ENCODE measurements at regions of chr12 and their contacts with region 1.

Region 1: DNA sequence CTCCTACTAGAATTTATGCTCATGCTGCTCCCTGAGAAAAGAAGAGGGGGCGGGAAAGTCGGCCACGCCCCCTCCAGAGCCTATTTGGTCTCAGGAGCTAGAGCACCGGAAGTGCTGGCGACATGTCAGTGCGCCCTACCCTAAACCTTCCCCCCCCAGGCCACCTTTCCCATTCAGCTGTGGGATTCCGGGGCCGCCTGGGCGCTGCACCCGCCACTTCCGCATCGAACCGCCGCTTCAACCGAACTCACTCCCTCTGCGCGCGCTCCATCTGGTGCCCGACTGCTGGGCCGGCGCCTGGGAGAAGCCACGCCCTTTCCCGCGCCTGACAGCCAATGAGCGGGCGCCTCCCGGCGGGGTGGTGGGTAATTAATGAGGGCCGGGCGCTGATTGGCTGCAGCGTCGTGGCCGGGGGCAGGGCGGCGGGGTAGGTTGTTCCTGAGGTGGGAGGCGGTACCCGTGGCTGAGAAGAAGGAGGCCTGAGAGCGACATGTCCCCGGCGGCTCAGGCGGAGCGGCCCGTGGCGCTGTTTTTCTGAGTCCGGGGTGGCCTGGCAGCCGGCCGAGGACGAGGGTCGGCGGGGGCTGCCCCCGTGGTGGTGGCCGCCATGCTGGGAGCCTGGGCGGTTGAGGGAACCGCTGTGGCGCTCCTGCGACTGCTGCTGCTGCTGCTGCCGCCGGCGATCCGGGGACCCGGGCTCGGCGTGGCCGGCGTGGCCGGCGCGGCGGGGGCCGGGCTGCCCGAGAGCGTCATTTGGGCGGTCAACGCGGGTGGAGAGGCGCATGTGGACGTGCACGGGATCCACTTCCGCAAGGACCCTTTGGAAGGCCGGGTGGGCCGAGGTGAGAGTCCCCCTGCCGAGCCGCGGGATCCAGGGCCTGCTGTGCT is at the start of gene MLEC:
- DNase-seq: peak; percentile 98 to 99
- ATAC-seq: peak; percentile 92 to 97 (median 96)
- H3K4me3 ChIP-seq: peak within 1 kb of the TSS; percentile 68 to 98 (median 90)
- H3K27ac ChIP-seq: peak within 1 kb of the TSS; percentile 55 to 95 (median 92)
- H3K4me1 ChIP-seq: peaks cover 3 to 61% (median 48%) of the 10 kb centered on the region in 9 donors
- H3K27me3 ChIP-seq: no peaks in the 10 kb centered on the region
- CTCF ChIP-seq: peak in 4 of 9 donors; percentile 20 to 51 (median 40)
- total RNA-seq, gene MLEC: 95.1 to 179 (median 118) TPM

Region 2: DNA sequence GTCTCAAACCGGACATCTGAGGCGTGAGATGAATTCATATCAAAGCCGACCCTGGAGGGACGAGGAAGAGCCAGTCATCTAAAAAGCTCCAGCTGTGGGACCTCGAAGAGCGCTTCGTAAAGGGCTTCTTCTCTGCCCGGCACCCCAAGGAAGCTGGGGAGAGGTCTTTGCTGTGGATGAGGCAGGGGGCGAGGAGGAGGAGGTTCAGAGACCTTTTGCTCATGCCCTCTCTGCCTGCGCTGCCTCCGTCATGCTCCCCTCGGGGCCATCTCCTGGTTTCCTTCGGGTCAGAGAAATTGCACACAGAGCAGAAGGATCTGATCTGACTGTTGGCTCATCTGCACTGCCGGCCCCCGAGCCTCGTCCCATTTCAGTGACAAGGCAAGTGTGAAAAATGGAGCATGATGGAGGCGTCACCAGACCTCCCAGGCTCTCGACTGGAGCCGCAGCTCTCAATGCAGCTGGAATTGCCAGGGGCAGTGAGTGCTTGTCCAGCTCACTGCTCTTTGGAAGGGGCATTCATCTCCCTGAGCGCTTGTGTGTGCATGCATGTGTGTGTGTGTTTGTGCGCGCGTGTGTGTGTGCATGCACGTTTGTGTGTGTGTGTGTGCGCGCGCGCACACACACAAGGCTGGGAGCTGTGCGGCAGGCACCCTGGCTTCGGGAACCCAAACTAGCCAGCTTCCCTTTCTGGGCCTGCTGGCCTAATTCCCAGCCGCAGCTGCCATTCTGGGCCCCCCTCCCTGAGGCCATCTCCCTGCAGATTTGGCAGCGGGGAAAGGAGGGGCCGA is 37.3 kb before region 1 on chr12:
- intact Hi-C with region 1: loop called in 5 of 10 experiments (anchors 2 to 5 kb)
- DNase-seq: peak; percentile 16 to 51
- ATAC-seq: peak in 4 of 8 donors; percentile 1 to 29 (median 5)
- H3K4me3 ChIP-seq: peak overlapping the region; percentile 33 to 57 (median 48)
- H3K27ac ChIP-seq: peak overlapping the region; percentile 31 to 85 (median 68)
- H3K4me1 ChIP-seq: peaks cover 12 to 57% (median 46%) of the 10 kb centered on the region in 9 donors
- H3K27me3 ChIP-seq: peaks cover 0 to 38% (median 12%) of the 10 kb centered on the region in 7 donors
- CTCF ChIP-seq: peak in 3 of 9 donors; percentile 20 to 33 (median 21)